Esophagus muscularis mucosa (tissue), 4 donors: ENCODE measurements at regions of chr10 and their contacts with region 1.

Region 1: GRCh38 chr10:104045151-104046089 is 40.3 kb downstream of the COL17A1 start:
- DNase-seq: no peak
- H3K4me3 ChIP-seq: no peak overlapping the region
- H3K27ac ChIP-seq: no peak overlapping the region
- H3K4me1 ChIP-seq: peaks cover 0 to 3% (median 0%) of the 10 kb centered on the region in 4 donors
- H3K27me3 ChIP-seq: no peaks in the 10 kb centered on the region
- CTCF ChIP-seq: peak; percentile 26 to 55 (median 39)
- EP300 ChIP-seq: no peak
- POLR2A ChIP-seq: no peak

Region 2: GRCh38 chr10:104209575-104210198 is 164.3 kb after region 1 on chr10:
- intact Hi-C with region 1: loop called (anchors 5 kb)
- DNase-seq: no peak
- H3K4me3 ChIP-seq: no peak overlapping the region
- H3K27ac ChIP-seq: no peak overlapping the region
- H3K4me1 ChIP-seq: no peaks in the 10 kb centered on the region
- H3K27me3 ChIP-seq: no peaks in the 10 kb centered on the region
- CTCF ChIP-seq: peak; percentile 40 to 56 (median 56)
- EP300 ChIP-seq: no peak
- POLR2A ChIP-seq: no peak